Ovary (tissue), 10 donors: ENCODE measurements at regions of chr5 and their contacts with region 1.

Region 1: GRCh38 chr5:135560858-135561257 is 17.9 kb downstream of the CXCL14 start:
- DNase-seq: peak; percentile 29 to 73 (median 55)
- H3K4me3 ChIP-seq: no peak overlapping the region
- H3K27ac ChIP-seq: no peak overlapping the region
- H3K4me1 ChIP-seq: no peaks in the 10 kb centered on the region
- H3K27me3 ChIP-seq: no peaks in the 10 kb centered on the region
- CTCF ChIP-seq: peak in 1 of 3 donors; percentile 40
- EP300 ChIP-seq: no peak
- POLR2A ChIP-seq: no peak

Region 2: DNA sequence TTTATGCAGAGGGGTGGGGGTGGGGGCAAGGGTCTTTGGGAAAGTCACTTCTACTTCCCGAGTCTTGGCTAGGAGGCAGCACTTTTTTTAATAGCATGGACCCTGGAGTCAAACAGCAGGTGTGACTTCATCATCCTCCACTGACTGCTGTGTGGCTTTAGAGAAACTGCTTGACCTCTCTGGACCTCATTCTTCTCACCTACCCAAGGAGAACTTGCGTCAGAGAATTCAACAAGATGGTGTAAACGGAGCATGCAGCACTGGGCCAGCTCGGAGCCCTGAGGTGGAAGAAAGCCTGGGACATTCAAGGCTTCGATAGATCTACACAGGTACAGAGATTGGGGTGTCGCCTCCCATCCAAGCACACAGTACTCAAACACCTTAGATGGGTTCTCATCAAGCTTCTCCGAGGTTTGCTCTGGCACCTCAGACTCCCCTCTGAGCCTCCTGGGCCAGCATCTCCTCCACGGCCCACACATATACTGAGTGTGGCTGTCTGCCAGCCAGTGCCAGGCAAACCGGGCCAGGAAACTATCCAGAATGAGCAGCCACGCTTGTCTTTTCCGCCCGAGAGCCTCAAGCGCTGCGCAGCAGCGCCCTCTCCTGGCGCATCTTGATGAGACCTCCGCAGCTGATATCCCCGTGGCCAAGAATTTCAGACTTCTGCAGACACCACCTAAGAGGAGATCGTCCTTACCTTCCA is 269.0 kb after region 1 on chr5:
- intact Hi-C with region 1: loop called in 2 of 4 experiments (anchors 5 kb)
- DNase-seq: peak in 4 of 5 donors; percentile 25 to 76 (median 42)
- H3K4me3 ChIP-seq: no peak overlapping the region
- H3K27ac ChIP-seq: no peak overlapping the region
- H3K4me1 ChIP-seq: no peaks in the 10 kb centered on the region
- H3K27me3 ChIP-seq: no peaks in the 10 kb centered on the region
- CTCF ChIP-seq: peak in 1 of 3 donors; percentile 28
- EP300 ChIP-seq: no peak
- POLR2A ChIP-seq: no peak